G401 (cell line): ENCODE measurements at regions of chr17 and their contacts with region 1.

Region 1: GRCh38 chr17:50783193-50783660 is 15.9 kb upstream of the ANKRD40CL start:
- DNase-seq: peak; percentile 85

Region 2: GRCh38 chr17:50737118-50737698 is 46.0 kb before region 1 on chr17:
- in situ Hi-C with region 1: no loop called
- DNase-seq: no peak

Region 3: GRCh38 chr17:50967795-50968194 is 184.6 kb after region 1 on chr17:
- in situ Hi-C with region 1: loop called (anchors 10 kb)
- DNase-seq: no peak